ENCODE measurements at regions of chr6 and their contacts with region 1.

Region 1: GRCh38 chr6:43053545-43054205 is at the start of gene CUL7:
- DNase-seq: peak; percentile 95
- H3K4me3 Mint-ChIP-seq: peak within 1 kb of the TSS; percentile 96
- H3K27ac Mint-ChIP-seq: peak within 1 kb of the TSS; percentile 93
- H3K4me1 Mint-ChIP-seq: peaks cover 54% of the 10 kb centered on the region
- H3K27me3 Mint-ChIP-seq: no peaks in the 10 kb centered on the region
- total RNA-seq, gene CUL7: 12.7 to 13.0 TPM

Region 2: DNA sequence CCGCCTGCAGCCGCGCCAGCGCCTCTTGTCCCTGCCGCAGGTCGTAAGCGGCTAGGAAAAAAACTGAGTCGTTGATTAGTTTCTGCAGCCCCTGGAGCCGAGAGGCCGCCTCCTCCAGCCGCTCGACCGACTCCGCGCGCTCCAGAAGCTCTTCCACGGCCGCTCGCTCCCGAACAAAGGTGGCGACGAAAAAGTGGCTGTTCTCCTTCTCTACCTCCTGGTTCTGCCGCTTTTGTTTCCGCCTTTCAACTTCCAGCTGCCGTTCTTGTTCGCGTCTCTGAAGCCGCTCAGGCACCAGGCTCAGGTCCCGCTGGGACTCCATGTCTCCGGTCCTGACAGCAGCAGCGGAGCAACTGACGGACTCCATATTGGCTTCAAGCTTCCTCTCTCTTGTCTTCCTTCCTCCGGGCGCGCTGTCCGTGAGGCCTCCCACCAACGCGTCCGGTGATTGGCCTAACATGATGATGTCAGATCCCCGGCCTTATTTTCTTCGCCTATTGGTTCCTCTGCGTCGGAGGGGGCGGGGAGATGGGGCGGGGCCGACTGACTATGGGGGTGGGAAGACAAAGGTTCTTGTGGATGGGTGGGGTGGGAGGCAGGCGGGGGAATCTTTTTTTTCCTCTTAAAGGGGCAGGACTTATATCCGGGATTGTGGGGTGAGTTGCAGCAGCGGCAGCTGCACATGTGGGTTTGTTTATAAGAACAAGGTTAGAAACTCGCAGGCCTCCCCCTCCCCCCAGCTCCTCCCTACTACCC is 307.8 kb before region 1 on chr6 and contains the start of gene TBCC:
- CTCF ChIA-PET with region 1: no interaction called
- POLR2A ChIA-PET with region 1: no interaction called
- DNase-seq: peak; percentile 96
- H3K4me3 Mint-ChIP-seq: peak within 1 kb of the TSS; percentile 96
- H3K27ac Mint-ChIP-seq: peak within 1 kb of the TSS; percentile 100
- H3K4me1 Mint-ChIP-seq: peaks cover 34% of the 10 kb centered on the region
- H3K27me3 Mint-ChIP-seq: no peaks in the 10 kb centered on the region
- total RNA-seq, gene TBCC: 33.7 to 34.9 TPM

Region 3: DNA sequence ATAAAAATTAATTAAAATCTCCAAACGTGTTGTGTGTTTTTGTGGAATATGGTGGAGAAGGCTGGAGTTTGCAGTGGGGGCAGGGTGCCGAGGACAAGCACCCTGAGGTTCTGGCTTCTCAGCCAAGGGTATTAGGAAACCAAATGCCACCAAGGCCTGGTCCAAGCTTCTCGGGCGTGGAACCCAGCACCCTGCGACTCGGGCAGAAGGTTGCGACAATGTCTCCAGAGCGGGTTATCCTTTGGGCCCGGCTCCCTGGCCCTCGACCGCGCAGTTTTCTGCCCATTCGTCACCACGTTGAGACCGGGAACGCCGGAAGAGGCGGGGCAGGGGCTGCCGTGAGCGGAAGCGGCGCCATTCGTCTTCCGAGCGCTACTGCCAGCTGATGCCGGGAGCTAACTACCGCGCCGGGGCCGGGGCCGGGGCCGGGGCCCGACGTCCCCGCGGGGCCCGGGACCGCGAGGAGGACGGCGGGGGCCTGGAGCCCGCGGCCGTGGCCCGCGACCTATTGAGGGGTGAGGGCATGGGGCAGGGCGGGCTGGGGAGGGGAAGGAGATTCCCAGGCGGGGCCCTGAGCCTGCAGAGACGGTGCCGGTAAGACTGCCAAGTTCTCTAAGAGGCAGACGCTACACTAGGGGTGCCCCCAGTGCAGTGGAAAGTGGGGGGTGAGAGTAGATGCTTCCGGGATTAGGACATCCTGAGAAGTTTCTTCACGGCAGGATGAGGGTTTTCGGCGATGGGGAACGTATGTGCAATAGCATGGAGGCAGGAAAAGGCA is 32.2 kb before region 1 on chr6 and contains the start of gene RRP36:
- CTCF ChIA-PET with region 1: no interaction called
- POLR2A ChIA-PET with region 1: interaction called, 27 read pairs
- DNase-seq: peak; percentile 63
- H3K4me3 Mint-ChIP-seq: peak within 1 kb of the TSS; percentile 85
- H3K27ac Mint-ChIP-seq: peak within 1 kb of the TSS; percentile 79
- H3K4me1 Mint-ChIP-seq: peaks cover 46% of the 10 kb centered on the region
- H3K27me3 Mint-ChIP-seq: no peaks in the 10 kb centered on the region
- total RNA-seq, gene RRP36: 59.2 to 60.4 TPM

Measured in activated CD4-positive, alpha-beta memory T cell treated with anti-CD3 and anti-CD28 coated beads, Interleukin-2, amount 10 ng/mL, durations not matched to agents 7 days and 5 days (primary cell).